ENCODE measurements at regions of chr3 and their contacts with region 1.

Region 1: GRCh38 chr3:160012108-160012507 is 23.5 kb downstream of the IL12A start:
- DNase-seq: no peak
- ATAC-seq: no peak

Region 2: DNA sequence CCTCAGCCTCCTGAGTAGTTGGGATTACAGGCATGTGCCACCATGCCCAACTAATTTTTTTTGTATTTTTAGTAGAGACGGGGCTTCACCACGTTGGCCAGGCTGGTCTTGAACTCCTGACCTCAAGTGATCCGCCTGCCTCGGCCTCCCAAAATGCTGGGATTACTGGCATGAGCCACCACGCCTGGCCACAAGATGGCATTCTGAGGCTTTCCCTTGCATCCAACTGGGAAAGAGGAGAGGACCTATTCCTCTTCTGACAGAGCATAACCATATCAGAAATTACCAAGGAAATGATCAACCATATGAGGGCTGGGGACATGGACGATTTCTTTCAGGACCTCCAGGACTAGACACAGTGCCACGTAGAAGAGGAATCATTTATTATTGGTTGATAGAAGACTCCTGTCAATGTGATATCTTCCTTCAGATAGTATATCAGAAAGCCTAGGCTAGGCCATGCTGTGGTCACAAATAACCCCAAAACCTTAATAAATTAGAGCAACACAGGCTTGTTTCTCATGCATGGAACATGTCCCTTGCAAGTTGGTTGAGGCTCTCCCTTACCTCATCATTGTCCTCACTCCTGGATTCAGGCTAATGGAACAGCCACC is 395.8 kb before region 1 on chr3:
- intact Hi-C with region 1: loop called in 1 of 2 experiments (anchors 10 kb)
- DNase-seq: peak in 1 of 2 donors; percentile 59
- ATAC-seq: peak; percentile 80

Region 3: DNA sequence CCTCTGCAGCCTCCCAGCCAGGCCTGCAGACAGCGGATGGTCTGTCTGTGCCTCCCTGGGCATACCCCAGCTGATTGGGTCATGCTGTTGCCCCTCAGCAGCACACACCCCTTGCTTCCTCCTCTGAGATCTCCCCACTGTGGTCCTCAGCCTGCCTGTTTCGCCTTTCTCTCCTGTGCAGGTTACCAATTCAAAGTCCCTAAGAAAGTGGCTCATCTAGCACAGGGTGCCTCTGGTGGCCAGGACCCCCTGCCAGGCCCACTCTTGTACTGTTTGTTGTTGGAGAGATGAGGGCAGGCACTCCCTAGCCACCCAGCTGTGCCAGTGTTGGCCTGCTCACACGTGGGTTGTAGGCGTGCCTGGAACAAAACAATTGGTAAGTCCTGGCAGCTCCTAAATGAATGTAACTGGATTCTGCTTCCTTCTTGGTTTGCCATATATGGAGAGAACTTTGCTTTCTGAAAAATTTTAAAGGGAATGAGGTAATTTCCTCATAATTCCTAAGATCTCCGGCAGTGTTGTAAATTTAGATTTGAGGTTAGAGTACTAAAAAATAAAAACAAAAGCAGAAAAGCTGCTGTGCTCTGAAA is 236.6 kb before region 1 on chr3:
- intact Hi-C with region 1: no loop called
- DNase-seq: peak; percentile 32 to 52
- ATAC-seq: peak; percentile 87

Measured in left colon (tissue), 2 donors.